Activated CD4-positive, alpha-beta memory T cell treated with anti-CD3 and anti-CD28 coated beads for 36 hours (primary cell): ENCODE measurements at regions of chr17 and their contacts with region 1.

Region 1: DNA sequence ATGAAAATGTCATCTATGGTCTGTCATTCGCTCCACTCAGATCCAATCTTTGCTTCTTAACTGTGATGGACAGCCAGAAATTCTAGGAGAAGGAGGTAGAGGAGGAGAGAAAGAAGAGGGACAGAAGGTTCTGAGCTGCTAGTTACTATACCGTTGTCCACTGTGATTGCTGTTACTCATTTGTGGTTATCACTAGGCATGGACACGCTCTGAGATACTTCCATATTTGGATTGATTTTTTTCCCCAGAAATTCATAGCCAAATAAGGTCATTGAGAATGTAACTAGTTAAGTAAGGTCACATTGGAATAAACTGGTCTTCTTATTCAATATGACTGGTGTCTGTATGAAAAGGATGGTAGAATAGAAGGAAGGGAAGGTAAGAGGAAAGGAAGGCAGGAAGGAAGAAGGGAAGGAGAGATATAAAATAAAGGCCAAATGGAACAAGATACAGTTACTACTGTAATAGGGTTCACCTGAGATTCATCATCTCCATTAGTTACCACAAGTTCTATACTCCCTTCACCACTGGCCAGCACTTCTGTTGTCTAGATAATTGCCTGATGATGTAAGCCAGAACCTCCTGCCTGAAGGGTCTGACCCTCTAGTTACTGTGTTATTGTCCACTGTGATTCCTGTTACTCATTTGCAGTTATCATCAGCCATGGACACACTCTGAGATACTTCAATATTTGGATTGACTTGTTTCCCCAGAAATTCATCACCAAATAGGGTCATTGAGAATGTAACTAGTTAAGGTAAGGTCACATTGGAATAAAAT is 2.9 kb downstream of the KRTAP9-7 start:
- DNase-seq: no peak
- H3K4me3 Mint-ChIP-seq: no peak overlapping the region
- H3K27ac Mint-ChIP-seq: no peak overlapping the region
- H3K4me1 Mint-ChIP-seq: no peaks in the 10 kb centered on the region
- H3K27me3 Mint-ChIP-seq: peaks cover 8% of the 10 kb centered on the region

Region 2: DNA sequence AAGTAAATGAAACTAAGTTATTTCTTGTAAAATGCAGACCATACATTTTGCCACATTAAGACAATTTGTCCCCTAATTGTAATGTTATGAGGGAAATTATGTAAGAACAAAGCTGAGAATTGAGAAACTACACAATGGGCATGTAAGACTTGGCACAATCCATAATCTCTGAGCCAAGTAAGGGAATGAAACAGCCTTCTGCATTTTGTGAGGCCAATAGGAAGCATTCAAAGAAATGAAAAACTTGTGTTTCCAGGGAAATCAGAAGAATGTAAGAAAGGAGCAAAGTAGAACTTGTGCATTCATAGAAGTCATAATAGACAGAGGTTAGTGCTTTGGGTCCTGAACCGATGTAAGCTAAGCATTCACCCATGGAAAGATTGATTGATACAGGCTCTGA is 27.1 kb before region 1 on chr17:
- CTCF ChIA-PET with region 1: no interaction called
- POLR2A ChIA-PET with region 1: no interaction called
- intact Hi-C with region 1: no loop called
- DNase-seq: no peak
- H3K4me3 Mint-ChIP-seq: no peak overlapping the region
- H3K27ac Mint-ChIP-seq: no peak overlapping the region
- H3K4me1 Mint-ChIP-seq: no peaks in the 10 kb centered on the region
- H3K27me3 Mint-ChIP-seq: peaks cover 6% of the 10 kb centered on the region

Region 3: DNA sequence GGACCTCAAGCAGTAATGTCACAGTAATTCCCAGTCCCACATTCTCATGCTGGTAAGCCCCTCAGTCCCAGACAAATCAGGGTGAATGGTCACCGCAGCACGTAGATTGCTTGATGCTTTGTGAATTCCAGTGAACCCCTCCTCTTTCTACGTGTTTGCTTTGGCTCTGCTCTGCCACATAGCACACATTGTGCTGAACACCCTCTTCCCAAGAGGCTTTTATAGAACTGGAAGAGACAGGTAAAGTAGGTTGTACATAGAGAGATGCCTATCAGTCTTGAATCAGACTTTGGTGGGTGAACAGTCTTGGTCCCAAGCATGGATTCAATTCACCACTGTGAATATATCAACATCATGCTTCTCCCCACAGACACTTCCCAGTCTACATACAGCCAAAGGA is 13.8 kb before region 1 on chr17:
- CTCF ChIA-PET with region 1: no interaction called
- POLR2A ChIA-PET with region 1: no interaction called
- intact Hi-C with region 1: loop called (anchors 1 kb)
- DNase-seq: no peak
- H3K4me3 Mint-ChIP-seq: no peak overlapping the region
- H3K27ac Mint-ChIP-seq: no peak overlapping the region
- H3K4me1 Mint-ChIP-seq: peaks cover 11% of the 10 kb centered on the region
- H3K27me3 Mint-ChIP-seq: peaks cover 4% of the 10 kb centered on the region

Region 4: GRCh38 chr17:41291306-41291705 is 12.9 kb after region 1 on chr17:
- CTCF ChIA-PET with region 1: no interaction called
- POLR2A ChIA-PET with region 1: no interaction called
- intact Hi-C with region 1: no loop called
- DNase-seq: no peak
- H3K4me3 Mint-ChIP-seq: no peak overlapping the region
- H3K27ac Mint-ChIP-seq: no peak overlapping the region
- H3K4me1 Mint-ChIP-seq: no peaks in the 10 kb centered on the region
- H3K27me3 Mint-ChIP-seq: peaks cover 2% of the 10 kb centered on the region

Region 5: DNA sequence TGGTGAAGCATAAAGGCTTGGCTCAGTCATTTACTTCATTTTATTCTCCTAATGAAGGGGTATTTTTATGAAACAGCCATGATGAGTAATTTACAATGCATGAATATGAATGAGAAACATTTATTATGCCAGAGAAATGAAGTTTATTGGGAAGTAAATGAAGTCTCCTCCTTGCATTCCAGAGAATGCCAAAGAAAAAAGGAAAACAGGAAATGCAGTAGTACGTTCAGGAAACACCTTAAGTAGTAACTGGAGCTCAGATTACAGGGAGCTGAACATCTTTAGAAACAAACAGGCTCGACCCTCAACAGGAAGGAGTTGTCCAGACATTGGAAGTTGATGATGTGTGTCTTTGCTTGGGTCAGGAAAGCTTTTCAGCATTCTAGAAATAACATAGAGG is 99.2 kb after region 1 on chr17:
- CTCF ChIA-PET with region 1: no interaction called
- POLR2A ChIA-PET with region 1: no interaction called
- intact Hi-C with region 1: no loop called
- DNase-seq: no peak
- H3K4me3 Mint-ChIP-seq: no peak overlapping the region
- H3K27ac Mint-ChIP-seq: no peak overlapping the region
- H3K4me1 Mint-ChIP-seq: peaks cover 6% of the 10 kb centered on the region
- H3K27me3 Mint-ChIP-seq: no peaks in the 10 kb centered on the region